ENCODE measurements at regions of chr1 and their contacts with region 1.

Region 1: GRCh38 chr1:60031146-60031545 is 42.4 kb downstream of the C1orf87 start:
- DNase-seq: no peak
- H3K4me3 Mint-ChIP-seq: no peak overlapping the region
- H3K27ac Mint-ChIP-seq: no peak overlapping the region
- H3K4me1 Mint-ChIP-seq: no peaks in the 10 kb centered on the region
- H3K27me3 Mint-ChIP-seq: no peaks in the 10 kb centered on the region
- CTCF ChIP-seq: no peak

Region 2: DNA sequence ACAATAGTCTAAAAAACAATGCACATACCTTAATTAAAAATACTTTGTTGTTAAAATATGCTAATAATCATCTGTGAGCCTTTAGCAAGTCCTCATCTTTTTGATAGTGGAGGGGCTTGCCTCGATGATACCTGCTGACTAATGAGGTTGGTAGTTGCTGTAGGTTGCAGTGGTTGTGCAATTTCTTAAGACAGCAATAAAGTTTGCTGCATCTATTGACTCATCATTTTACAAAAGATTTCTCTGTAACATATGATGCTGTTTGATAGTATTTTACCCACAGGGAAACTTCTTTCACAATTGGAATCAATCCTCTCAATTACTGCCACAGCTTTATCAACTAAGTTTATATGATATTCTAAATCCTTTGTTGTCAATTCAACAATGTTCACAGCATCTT is 34.9 kb after region 1 on chr1:
- CTCF ChIA-PET with region 1: no interaction called
- intact Hi-C with region 1: loop called (anchors 2 kb)
- DNase-seq: no peak
- H3K4me3 Mint-ChIP-seq: no peak overlapping the region
- H3K27ac Mint-ChIP-seq: no peak overlapping the region
- H3K4me1 Mint-ChIP-seq: no peaks in the 10 kb centered on the region
- H3K27me3 Mint-ChIP-seq: no peaks in the 10 kb centered on the region
- CTCF ChIP-seq: no peak